KBM-7 (cell line): ENCODE measurements at regions of chr1 and their contacts with region 1.

Region 1: DNA sequence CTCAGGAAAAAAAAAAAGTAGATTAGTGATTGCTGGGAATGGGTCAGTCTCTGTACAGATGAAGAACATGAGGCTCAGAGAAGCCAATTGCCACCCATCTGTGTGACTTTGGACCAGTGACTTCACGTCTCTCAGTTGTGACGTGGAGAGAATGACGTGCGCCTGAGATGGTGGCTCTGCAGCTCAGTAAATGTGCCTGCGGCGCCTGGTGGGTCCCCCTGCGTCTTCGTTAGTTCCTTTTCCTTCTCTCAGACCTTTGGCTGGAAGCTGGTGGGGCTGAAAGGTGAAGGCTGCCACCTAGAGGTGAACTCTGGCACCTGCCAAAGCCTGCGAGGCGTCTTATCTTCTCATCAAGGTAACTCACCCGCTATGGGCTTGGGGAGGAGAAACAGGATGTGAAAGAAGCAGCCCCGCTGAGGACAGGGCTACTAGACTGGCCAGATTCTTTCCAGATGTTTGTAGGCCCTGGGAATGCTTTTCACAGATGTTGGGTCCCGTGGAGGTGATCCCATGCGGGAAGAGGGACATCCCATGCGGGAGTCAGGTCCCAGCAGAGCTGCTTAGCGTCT is 8.7 kb upstream of the E2F2 start:
- DNase-seq: peak; percentile 100

Region 2: GRCh38 chr1:23634842-23635651 is 95.3 kb after region 1 on chr1:
- in situ Hi-C with region 1: loop called (anchors 10 kb)
- DNase-seq: peak; percentile 82